CD8-positive, alpha-beta T cell (primary cell): ENCODE measurements at regions of chr17 and their contacts with region 1.

Region 1: DNA sequence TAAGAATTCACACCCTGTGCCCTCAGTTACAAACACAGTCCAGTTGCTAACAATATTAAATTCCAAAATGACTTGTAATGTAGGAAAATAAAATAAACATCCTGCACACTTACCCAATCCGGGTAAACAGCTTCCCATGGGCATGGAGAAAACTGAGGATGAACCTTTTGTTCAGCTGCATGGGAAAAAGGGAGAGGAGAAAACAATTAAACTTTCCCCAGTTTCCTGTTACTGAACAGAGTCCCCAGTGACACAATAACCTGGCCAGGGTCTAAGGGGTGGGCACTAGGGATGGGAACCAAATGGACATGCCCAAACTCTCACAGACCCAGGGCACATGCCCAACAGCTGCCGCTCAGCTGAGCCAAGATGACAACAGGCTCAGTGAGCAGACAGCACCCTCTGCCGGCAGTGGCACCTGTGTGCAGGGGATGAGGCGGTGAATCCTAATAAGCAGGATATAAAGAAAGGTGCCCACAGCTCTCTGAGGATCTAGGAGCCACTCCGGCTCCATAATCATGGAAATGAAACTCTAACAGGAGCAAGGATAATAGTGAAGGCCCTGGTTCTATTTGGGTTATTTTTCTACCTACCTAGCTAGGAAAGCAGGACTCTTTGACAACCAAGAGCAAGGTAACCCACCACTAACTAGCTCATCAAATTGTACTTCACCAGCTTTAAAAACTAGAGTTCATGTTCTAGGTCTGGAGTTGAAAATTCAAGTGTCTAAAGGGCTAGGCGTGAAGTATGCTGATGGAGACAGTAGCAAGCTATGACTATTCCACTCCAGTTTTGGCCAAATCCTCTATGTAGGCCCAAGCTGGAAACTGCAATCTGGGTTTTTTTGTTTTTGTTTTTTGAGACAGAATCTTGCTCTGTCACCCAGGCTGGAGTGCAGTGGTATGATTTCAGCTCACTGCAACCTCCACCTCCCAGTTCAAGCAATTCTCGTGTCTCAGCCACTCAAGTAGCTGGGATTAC is 58.8 kb downstream of the SMG6 start:
- DNase-seq: peak; percentile 72 to 90 (median 86)
- ATAC-seq: peak; percentile 91
- H3K4me3 ChIP-seq: no peak overlapping the region
- H3K4me3 Mint-ChIP-seq: no peak overlapping the region
- H3K27ac ChIP-seq: peak overlapping the region in 1 of 2 experiments; percentile 23
- H3K27ac Mint-ChIP-seq: peak overlapping the region; percentile 78
- H3K4me1 ChIP-seq: peaks cover 11% of the 10 kb centered on the region
- H3K4me1 Mint-ChIP-seq: peaks cover 32% of the 10 kb centered on the region
- H3K27me3 ChIP-seq: no peaks in the 10 kb centered on the region
- H3K27me3 Mint-ChIP-seq: no peaks in the 10 kb centered on the region
- CTCF ChIP-seq: peak; percentile 94

Region 2: DNA sequence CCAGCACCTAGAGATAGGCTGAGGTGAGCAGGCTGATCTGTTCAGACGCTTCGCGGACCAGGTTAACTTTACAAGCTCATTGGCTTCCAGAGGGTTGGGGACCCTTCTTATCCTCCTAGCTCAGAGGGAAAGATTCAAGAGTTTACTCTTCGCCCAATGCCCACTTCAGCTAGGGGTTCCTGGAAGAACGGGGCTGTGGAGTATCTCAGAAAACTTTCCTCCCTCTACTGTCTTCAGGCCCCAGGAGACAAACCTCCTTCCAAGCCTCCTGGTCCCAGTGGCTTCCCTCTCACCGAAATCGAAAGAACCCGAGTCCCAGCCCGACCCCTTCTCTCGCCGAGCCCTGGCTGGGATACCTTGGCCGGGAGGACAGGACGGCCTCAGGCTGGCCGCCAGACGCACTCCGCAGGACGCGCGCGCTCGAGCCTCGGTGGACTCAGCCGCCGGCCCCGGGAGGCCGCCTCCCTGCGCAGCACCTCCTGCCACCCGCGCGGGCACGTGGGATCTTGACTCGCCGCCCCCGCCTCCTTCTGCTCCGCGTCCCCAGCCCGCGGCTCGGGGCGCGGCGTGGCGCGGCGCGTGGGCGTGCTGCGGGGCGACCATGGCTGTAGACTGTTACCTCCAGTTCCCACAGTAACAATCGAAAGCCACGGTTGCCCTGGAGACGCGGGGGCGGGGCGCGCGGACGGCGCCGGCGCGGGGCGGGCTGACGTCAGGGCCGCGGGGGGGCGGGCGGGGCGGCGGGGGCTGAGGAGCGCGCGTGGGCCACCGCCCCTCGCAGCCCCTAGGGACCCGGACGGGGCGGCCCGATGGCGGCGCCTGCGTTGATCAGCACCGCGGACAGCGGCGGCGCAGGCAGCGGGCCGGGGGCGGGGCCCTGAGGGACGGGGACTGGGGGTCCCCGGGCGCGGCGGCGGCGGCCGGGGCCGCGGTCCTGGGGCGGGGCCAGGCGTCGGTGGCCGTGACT is 195.2 kb before region 1 on chr17:
- CTCF ChIA-PET with region 1: interaction called, 240 read pairs
- POLR2A ChIA-PET with region 1: interaction called, 18 read pairs
- intact Hi-C with region 1: no loop called
- DNase-seq: peak; percentile 84 to 93 (median 88)
- ATAC-seq: peak; percentile 69
- H3K4me3 ChIP-seq: peak overlapping the region; percentile 51 to 73
- H3K4me3 Mint-ChIP-seq: peak overlapping the region; percentile 70
- H3K27ac ChIP-seq: peak overlapping the region in 1 of 2 experiments; percentile 52
- H3K27ac Mint-ChIP-seq: no peak overlapping the region
- H3K4me1 ChIP-seq: peaks cover 45% of the 10 kb centered on the region
- H3K4me1 Mint-ChIP-seq: peaks cover 29% of the 10 kb centered on the region
- H3K27me3 ChIP-seq: no peaks in the 10 kb centered on the region
- H3K27me3 Mint-ChIP-seq: peaks cover 8% of the 10 kb centered on the region
- CTCF ChIP-seq: no peak

Region 3: DNA sequence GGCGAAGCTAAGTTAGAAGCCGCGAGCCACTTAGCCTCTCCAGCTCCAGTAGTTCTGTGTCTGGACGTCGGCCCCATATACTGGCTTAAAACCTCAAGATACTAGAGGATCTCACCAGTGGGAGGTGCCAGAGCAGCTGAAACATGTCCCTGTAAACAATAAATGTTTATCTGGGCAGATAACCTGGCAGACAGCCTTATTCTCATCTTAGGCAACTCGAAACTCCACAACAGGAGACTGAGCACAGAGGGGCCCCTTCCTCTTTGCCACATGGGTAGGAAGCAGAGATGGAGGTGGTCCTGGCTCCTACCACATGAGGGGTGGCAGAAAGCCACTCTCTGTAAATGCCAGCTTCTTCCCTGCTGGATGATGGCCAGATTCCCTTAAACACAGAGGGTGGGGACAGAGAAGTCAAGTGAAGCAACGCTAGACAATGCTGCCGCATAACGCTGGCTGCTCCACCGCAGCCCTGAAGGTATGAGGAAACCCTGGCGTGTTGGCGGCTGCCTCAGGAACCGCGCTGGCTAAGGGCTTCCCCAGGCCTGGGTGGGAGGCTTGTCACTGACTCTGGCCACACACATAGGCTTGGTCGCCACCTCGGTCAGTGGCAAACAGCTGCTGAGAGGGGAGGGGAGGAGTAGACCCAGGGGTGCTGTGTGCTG is 122.1 kb before region 1 on chr17:
- CTCF ChIA-PET with region 1: interaction called, 12 read pairs
- POLR2A ChIA-PET with region 1: no interaction called
- intact Hi-C with region 1: no loop called
- DNase-seq: peak in 2 of 9 experiments; percentile 13 to 35
- ATAC-seq: no peak
- H3K4me3 ChIP-seq: no peak overlapping the region
- H3K4me3 Mint-ChIP-seq: no peak overlapping the region
- H3K27ac ChIP-seq: no peak overlapping the region
- H3K27ac Mint-ChIP-seq: no peak overlapping the region
- H3K4me1 ChIP-seq: peaks cover 17% of the 10 kb centered on the region
- H3K4me1 Mint-ChIP-seq: peaks cover 23% of the 10 kb centered on the region
- H3K27me3 ChIP-seq: no peaks in the 10 kb centered on the region
- H3K27me3 Mint-ChIP-seq: no peaks in the 10 kb centered on the region
- CTCF ChIP-seq: no peak

Region 4: DNA sequence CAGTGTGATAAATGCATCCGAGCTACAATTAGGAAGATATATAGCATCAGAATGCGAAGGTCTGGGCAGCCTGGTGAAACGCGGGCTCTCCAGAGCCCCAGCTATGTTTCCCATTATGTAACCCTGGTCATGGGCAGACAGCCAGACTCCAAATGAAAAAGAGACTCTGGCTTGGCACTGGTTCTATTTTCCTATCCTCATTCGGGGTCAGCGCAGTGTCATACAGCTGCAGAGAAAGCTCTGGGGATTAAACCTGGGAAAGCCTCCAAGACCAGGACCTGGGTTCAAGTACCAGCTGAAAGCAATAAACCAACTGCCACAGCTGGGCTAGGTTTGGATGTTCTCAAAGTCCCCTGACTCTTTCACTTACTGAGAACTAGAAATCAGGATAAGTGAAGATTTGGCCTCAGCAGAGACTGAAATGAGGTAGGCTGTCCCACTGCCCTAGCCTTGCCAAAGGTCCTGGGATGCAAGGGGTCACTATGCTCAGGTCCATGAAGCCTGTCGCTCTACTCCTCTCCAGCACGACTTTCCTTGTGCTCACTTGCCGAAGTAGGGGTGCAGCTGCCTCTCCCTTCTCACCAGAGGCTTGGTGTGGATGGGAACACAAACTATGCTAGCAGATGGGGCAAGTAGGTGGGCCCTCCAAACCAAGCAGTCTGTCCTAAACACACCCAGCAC is 65.1 kb before region 1 on chr17:
- CTCF ChIA-PET with region 1: interaction called, 10 read pairs
- POLR2A ChIA-PET with region 1: no interaction called
- intact Hi-C with region 1: no loop called
- DNase-seq: no peak
- ATAC-seq: no peak
- H3K4me3 ChIP-seq: no peak overlapping the region
- H3K4me3 Mint-ChIP-seq: no peak overlapping the region
- H3K27ac ChIP-seq: no peak overlapping the region
- H3K27ac Mint-ChIP-seq: peak overlapping the region; percentile 37
- H3K4me1 ChIP-seq: no peaks in the 10 kb centered on the region
- H3K4me1 Mint-ChIP-seq: peaks cover 7% of the 10 kb centered on the region
- H3K27me3 ChIP-seq: no peaks in the 10 kb centered on the region
- H3K27me3 Mint-ChIP-seq: no peaks in the 10 kb centered on the region
- CTCF ChIP-seq: no peak

Region 5: GRCh38 chr17:2222901-2223616 is 21.8 kb before region 1 on chr17:
- CTCF ChIA-PET with region 1: interaction called, 21 read pairs
- POLR2A ChIA-PET with region 1: no interaction called
- intact Hi-C with region 1: no loop called
- DNase-seq: peak; percentile 27 to 94 (median 64)
- ATAC-seq: peak; percentile 89
- H3K4me3 ChIP-seq: peak overlapping the region in 1 of 2 experiments; percentile 3
- H3K4me3 Mint-ChIP-seq: peak overlapping the region; percentile 16
- H3K27ac ChIP-seq: peak overlapping the region in 1 of 2 experiments; percentile 71
- H3K27ac Mint-ChIP-seq: peak overlapping the region; percentile 84
- H3K4me1 ChIP-seq: peaks cover 12% of the 10 kb centered on the region
- H3K4me1 Mint-ChIP-seq: peaks cover 44% of the 10 kb centered on the region
- H3K27me3 ChIP-seq: no peaks in the 10 kb centered on the region
- H3K27me3 Mint-ChIP-seq: no peaks in the 10 kb centered on the region
- CTCF ChIP-seq: no peak

Region 6: GRCh38 chr17:2275722-2276121 is 30.9 kb after region 1 on chr17:
- CTCF ChIA-PET with region 1: interaction called, 91 read pairs
- POLR2A ChIA-PET with region 1: no interaction called
- intact Hi-C with region 1: no loop called
- DNase-seq: peak in 1 of 9 experiments; percentile 59
- ATAC-seq: peak; percentile 56
- H3K4me3 ChIP-seq: no peak overlapping the region
- H3K4me3 Mint-ChIP-seq: peak overlapping the region; percentile 30
- H3K27ac ChIP-seq: peak overlapping the region in 1 of 2 experiments; percentile 30
- H3K27ac Mint-ChIP-seq: peak overlapping the region; percentile 58
- H3K4me1 ChIP-seq: peaks cover 37% of the 10 kb centered on the region
- H3K4me1 Mint-ChIP-seq: peaks cover 52% of the 10 kb centered on the region
- H3K27me3 ChIP-seq: no peaks in the 10 kb centered on the region
- H3K27me3 Mint-ChIP-seq: no peaks in the 10 kb centered on the region
- CTCF ChIP-seq: no peak